ENCODE measurements at regions of chr14 and their contacts with region 1.

Region 1: DNA sequence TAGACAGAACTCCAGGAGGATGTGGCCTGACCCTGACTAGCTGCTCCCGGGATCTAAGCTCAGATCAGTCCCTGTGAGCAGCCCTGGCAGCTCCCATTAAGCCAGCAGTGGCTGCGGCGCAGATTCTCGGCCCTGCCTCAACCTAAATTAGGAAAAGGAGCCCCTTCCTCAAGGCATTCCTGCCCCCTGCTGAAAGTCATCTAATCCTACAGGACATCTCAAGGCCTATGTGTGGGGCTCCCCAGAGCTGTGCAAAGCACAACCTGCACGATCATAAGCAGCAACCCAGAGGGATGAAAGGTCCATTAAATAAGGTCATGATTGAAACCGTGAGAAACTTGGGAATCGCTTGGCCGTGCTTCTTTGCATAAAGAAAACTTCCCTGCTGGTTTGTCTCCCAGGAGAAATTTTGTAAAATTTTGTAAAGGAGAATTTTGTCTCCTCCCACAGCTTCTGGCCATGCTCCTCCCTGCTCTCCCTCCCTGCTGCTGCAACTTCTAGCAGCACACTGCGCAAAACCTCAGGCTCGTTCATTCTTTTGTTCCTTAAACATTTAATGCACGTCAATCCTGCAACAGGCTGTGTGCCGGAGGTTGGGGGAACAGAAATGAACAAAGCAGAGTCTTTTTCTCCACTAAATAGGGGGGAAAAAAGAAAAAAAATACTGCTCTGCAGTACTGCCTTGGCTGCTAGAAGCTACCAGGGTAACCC is 96.6 kb upstream of the SLC35F4 start:
- DNase-seq: peak; percentile 81
- ATAC-seq: peak; percentile 96
- H3K4me3 Mint-ChIP-seq: 0 out of 2 replicates have a peak overlapping the region, but pooled peaks have one; percentile 18
- H3K27ac Mint-ChIP-seq: no peak overlapping the region; the same call in none of the 2 replicates
- H3K4me1 Mint-ChIP-seq: peaks cover 27% of the 10 kb centered on the region
- H3K27me3 Mint-ChIP-seq: peaks cover 5% of the 10 kb centered on the region; the same call in 1 of the 2 replicates
- CTCF ChIP-seq: no peak

Region 2: DNA sequence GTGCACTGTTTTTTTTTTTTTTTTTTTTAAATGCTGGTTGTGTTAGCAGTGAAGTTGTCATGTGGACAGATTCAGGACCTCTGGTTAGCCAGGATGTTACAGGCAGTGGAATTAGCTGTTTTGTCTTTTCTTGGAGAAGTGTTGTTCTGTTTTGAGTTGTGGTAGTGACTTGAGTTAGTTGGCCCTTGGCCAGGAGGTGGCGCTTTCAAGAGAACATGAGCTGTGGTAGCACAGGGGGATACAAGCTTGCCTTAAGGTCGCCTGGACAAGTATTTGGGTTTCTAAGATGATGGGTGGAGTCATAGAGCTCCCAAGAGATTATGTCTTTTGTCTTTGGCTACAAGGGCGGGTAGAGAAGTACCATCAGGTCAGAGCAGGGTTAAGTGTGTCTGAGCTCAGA is 435.5 kb before region 1 on chr14:
- CTCF ChIA-PET with region 1: interaction called, 20 read pairs
- POLR2A ChIA-PET with region 1: no interaction called
- DNase-seq: peak; percentile 70
- ATAC-seq: peak; percentile 95
- H3K4me3 Mint-ChIP-seq: no peak overlapping the region
- H3K27ac Mint-ChIP-seq: no peak overlapping the region
- H3K4me1 Mint-ChIP-seq: no peaks in the 10 kb centered on the region
- H3K27me3 Mint-ChIP-seq: no peaks in the 10 kb centered on the region; the same call in 1 of the 2 replicates
- CTCF ChIP-seq: 0 out of 2 replicates have a peak, but pooled peaks have one; percentile 14

Region 3: GRCh38 chr14:57845802-57846531 is 116.5 kb before region 1 on chr14:
- CTCF ChIA-PET with region 1: no interaction called
- POLR2A ChIA-PET with region 1: no interaction called
- DNase-seq: no peak
- ATAC-seq: no peak
- H3K4me3 Mint-ChIP-seq: no peak overlapping the region
- H3K27ac Mint-ChIP-seq: no peak overlapping the region
- H3K4me1 Mint-ChIP-seq: no peaks in the 10 kb centered on the region
- H3K27me3 Mint-ChIP-seq: no peaks in the 10 kb centered on the region
- CTCF ChIP-seq: no peak

Region 4: DNA sequence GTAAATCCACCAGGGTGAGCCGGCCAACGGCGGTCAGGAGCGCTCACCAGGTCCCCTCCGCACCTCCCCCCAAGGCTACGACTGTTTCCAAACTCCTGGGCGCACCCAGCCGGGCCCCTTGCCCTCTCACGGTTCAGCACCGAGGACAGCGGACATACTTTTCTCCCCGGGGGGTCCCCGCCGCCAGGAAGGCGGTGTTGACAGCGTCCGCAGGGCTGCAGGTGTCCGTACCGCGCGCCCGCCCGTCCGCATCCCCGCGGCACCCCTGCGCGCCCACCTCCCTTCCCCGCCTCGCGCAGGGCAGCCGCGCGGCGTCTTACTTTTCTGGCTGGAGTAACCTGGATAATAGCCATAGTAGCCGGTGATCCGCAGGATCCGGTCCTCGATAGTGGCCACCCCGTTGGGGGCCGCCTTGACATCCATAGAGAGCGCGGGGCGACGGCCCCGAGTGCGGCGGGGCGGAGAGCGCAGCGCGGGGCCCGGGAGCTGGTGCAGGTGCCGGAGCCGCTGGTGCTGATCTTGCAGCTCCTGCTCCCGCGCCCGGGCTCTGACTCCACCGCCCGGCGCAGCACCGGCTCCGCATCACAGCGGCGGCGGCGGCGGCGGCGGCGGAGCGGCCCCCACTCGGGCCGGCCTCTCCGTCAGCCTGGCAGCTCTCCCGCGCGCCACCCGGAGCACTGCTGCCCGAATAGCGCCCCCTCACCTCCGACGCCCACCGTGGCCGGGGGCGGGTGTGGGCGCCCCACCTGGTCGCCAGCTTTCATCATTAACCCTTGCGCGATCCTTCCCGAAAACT is 96.9 kb before region 1 on chr14 and contains the start of gene SLC35F4:
- CTCF ChIA-PET with region 1: interaction called, 25 read pairs
- POLR2A ChIA-PET with region 1: no interaction called
- DNase-seq: peak; percentile 91
- ATAC-seq: peak; percentile 89
- H3K4me3 Mint-ChIP-seq: peak within 1 kb of the TSS; percentile 75
- H3K27ac Mint-ChIP-seq: no peak within 1 kb of the TSS
- H3K4me1 Mint-ChIP-seq: peaks cover 21% of the 10 kb centered on the region
- H3K27me3 Mint-ChIP-seq: peaks cover 37% of the 10 kb centered on the region
- CTCF ChIP-seq: no peak
- total RNA-seq, gene SLC35F4: not detected in 3 replicates

Region 5: DNA sequence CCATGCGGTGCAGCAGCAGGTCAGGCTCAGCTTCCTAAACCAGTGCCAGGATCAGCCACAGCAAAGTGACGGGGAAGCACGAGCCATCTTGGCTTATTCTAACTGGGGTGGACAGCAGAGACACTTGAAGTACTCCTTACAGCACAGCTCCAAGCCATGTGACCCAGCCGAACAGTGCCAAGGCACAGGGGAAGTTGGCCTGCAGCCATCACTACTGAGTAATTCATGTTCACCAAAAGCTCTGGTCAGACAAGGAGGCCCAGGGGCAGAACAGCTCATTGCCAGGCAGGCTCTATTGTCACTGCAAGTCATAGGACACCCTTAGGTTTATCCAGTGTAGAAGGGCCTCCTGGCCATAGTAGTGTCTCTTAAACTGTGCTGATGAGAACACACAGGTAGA is 73.2 kb before region 1 on chr14:
- CTCF ChIA-PET with region 1: interaction called, 20 read pairs
- POLR2A ChIA-PET with region 1: no interaction called
- DNase-seq: no peak
- ATAC-seq: no peak
- H3K4me3 Mint-ChIP-seq: no peak overlapping the region
- H3K27ac Mint-ChIP-seq: no peak overlapping the region
- H3K4me1 Mint-ChIP-seq: no peaks in the 10 kb centered on the region
- H3K27me3 Mint-ChIP-seq: no peaks in the 10 kb centered on the region
- CTCF ChIP-seq: no peak

Region 6: DNA sequence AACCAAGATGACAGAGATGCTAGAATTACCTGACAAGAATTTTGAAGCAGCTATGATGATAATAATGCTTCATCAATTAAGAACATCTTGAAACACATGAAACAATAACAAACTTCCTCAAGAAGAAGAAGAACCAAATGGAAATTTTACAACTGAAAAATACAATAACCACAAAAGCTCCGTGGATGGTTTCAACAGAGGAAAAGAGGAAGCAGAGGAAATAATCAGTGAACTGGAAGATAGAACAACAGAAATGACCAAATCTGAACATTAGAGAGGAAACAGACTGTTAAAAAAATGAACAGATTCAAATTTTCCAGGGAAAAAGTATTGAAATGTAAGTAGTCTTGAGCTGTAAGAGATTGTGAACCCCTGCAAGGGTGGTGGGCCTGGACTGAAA is 33.7 kb before region 1 on chr14:
- CTCF ChIA-PET with region 1: no interaction called
- POLR2A ChIA-PET with region 1: no interaction called
- DNase-seq: no peak
- ATAC-seq: no peak
- H3K4me3 Mint-ChIP-seq: no peak overlapping the region
- H3K27ac Mint-ChIP-seq: no peak overlapping the region
- H3K4me1 Mint-ChIP-seq: 0 out of 2 replicates have a peak, but pooled peaks cover 2% of the 10 kb centered on the region
- H3K27me3 Mint-ChIP-seq: peaks cover 2% of the 10 kb centered on the region; the same call in 1 of the 2 replicates
- CTCF ChIP-seq: no peak

Region 7: DNA sequence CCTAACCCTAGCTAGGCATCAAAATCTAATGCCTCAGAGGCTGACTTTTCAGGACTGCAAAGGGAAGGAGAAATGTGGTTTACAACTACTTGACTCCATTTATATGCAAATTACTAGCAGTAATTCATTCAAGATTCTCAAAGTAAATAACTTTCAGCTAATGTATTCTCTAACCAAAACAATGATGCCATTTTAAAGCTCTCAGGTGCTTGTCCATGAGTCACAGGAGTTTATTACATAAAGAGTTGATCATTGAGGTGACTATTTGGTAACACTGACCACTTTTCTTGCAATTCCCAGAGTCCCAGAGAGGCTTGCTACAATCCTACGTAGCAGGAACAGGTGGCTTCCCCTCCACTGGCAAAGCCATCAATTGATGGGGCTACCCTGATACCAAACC is 12.4 kb after region 1 on chr14:
- CTCF ChIA-PET with region 1: interaction called, 10 read pairs
- POLR2A ChIA-PET with region 1: no interaction called
- DNase-seq: no peak
- ATAC-seq: peak; percentile 56
- H3K4me3 Mint-ChIP-seq: no peak overlapping the region
- H3K27ac Mint-ChIP-seq: no peak overlapping the region
- H3K4me1 Mint-ChIP-seq: peaks cover 17% of the 10 kb centered on the region
- H3K27me3 Mint-ChIP-seq: no peaks in the 10 kb centered on the region
- CTCF ChIP-seq: no peak